ENCODE measurements at regions of chr2 and their contacts with region 1.

Region 1: DNA sequence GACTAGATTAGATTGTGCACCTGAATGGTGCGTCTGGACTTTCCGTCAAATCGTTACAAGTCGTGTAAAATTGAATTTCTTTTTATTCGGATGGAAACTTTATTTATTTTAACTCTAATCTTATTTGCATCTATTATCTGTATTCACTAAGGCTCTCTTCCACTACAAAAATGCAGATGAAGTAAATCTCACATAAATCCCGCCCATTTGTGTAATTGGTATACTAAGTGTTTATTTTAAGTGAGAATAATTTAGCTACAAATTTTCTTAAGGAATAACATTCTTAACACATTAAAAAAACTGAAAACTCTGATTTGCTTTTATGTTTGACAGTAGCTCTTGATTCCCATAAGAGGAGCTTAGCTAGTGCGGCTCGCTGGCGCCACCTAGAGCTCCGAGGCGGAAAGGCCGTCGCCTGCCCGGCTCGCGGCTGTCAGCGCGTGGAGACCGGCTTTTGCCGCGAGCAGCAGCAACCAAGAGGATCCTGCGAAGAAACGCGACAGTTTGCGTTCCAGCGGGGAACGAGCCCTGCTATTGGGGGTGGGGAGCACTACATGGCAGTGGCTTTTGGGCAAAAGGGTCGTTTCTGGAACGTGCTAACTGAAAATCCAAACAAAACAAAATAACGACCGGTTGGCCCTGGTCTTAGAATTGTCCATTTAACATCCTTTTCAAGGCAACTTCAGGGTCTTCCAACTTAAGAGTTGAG is 6.7 kb downstream of the SP9 start:
- DNase-seq: peak; percentile 77 to 98 (median 88)

Region 2: DNA sequence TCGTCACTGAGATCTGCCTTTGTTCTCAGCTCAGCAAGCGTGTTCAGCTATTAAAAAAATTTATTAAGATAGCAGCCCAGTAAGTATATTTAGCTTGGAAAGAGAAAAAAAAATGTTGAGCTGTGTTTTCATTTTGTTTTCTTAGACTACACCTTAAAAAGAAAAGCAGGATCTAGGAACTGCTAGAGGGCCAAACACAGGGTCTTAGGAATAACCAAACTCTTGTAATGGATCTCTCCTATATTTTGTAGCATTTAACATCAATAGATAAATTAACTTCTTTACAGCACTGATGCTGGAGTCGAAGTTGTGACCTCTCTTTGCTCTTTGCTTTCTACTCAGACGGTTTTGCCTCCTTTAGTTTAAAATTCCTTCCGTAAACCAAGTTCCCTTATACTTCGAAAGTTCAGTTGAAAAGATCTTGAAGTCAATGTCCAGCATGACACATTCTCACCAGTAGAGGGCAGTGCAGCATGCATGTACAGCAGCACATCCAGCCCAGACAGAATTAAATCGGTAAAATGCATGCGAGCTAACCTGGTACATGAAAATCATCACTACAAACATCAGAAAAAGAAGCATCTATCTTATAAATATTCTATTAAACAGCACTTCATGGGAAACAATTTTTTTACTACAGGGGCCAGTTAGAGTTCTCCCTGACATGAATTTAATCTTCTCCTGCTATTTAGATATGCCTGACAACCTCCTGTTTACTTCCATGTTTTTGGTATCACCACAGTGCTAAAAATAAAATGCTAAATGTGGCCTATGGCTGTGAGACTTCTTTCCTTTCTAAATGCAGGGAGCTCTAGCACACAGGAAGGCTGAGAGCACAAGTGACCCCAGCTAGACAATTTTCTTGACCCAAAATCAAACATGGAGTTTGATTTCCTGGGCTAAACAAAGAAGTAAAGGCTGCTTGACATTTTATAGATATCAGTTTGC is 1314.0 kb before region 1 on chr2:
- intact Hi-C with region 1: loop called (anchors 5 kb)
- DNase-seq: peak in 9 of 10 donors; percentile 34 to 94 (median 79)

Region 3: DNA sequence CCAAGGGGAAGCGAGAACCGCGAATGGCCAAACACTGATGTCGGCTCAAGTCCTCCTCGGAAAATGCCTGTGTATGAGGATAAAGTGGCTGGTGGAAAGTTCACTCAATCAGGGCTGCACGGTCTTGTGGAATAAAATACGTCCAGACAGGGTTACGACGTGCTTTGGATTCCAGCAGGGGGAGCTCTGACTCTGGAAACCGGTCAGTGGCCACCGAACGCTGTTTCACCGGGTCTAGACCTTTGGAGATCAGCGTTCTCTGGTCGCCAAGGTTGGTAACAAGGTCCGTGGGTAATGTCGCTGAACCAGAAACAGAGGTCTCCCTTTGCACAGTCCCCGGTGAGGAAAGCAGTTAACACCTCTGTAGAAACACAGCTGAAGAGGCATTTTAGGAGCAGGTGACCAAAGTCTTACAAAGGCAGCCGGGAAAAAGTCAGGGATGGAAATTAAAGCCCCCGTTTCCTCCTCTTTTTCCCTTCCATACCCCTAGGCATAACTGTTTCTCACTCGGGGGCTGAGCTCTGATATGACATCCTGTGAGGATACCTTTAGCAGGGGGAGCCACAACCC is 939.0 kb before region 1 on chr2:
- intact Hi-C with region 1: loop called (anchors 1 kb)
- DNase-seq: peak; percentile 43 to 96 (median 76)

Region 4: DNA sequence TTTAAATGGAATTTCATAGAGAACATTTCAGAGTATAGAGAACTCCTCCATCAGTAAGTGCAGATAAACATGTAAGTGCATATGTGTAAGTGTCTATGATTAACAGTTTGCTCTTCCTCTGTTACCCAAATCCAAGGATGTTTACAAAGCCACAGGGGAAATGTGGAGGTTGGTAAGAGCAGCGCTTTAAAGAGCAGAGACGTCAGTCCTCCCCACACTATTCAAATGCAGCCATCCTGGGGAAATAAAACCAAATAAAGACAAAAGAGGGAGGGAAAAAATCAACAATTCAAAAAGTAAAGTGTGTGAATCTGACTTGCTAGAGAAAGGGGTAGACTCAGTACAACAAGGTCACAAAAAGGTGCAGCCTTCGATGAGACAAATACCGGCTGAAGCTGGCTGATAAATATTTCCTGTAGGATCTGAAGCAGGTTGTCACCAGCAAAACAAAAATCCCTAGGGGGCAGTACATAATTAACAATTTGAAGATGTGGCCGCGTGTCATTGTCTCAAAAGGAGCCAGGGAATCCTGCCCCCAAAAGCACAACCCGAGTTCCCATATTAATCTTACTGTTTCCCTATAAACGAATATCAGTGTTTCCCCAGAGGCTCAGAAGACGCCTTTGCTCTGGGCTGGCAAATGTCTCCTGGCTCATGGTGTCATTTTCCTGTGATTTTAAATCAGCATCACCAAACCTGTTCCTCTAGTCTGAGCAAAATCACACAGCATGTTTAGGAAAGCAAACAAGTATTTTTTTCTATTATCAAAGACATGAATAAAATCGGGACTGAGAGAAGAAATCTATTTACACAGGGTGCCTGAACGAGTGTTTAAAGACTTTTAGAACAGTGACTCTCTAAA is 770.2 kb before region 1 on chr2:
- intact Hi-C with region 1: loop called (anchors 5 kb)
- DNase-seq: peak in 2 of 10 donors; percentile 6 to 8

Region 5: DNA sequence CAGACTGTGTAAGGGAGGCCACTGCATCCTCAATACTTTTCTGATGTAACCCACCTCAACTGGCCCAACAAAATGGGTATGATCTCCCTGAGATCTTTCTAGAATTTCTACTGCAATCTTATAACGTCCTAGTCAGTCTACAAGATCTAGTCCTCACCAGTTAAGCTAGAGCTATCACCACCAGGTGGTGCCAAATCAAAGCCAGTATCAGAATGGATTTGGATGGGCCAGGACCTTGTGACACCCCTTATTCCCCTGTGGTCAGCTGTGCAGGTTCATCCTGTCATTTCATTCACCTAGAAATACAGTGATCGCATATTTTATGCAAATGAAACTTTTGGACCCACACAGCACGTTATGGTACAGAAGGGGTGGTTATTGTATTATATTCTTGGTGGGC is 183.4 kb before region 1 on chr2:
- intact Hi-C with region 1: loop called (anchors 5 kb)
- DNase-seq: peak in 1 of 10 donors; percentile 32

Region 6: GRCh38 chr2:174248187-174248997 is 93.0 kb before region 1 on chr2 and contains the start of gene OLA1:
- intact Hi-C with region 1: loop called (anchors 5 kb)
- DNase-seq: peak; percentile 85 to 99 (median 93)

Region 7: DNA sequence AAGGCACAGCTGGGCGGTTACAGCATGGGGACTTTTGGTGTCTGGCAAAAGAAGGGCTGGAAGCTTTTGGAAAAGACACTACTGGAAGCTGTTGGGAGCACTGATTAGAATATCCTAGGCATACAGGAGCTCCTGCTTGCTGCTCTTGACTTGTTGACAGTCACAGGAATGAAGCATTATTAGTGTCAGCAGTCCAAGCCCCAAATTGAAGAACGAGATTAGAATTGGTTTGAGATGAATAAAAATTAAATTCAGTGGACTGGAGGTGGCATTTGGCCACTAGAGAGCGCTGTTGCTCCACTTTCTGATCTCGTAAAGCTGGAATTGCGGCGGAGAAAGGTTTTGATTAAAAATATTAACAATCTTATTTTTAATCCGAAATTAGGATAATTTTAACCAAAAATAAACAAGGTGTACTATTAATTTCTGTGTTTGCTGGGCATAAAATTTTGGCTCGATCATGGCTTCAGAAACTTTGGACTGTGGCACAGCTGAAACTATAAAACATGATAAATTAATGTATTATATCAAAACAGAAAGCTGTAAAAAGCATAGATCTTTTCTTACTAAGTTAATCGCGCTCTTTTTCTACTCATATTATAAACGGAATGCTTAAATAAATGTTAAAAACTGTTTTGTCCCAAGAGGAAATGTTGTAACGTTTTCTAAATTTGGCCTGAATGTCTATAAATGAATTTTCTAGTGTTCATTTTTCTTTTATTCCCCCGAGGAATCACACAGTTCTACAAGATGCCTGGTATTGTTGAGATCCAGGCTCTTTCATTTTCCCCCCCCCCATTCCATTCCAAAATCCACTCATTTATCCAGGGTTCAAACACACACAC is 1785.7 kb after region 1 on chr2:
- intact Hi-C with region 1: loop called (anchors 5 kb)
- DNase-seq: peak in 7 of 10 donors; percentile 55 to 92 (median 77)

Measured in posterior cingulate gyrus (tissue), 11 donors.